B cell (primary cell): ENCODE measurements at regions of chr11 and their contacts with region 1.

Region 1: GRCh38 chr11:114262681-114263512 is 33.3 kb upstream of the NNMT start:
- DNase-seq: peak; percentile 64
- ATAC-seq: no peak
- H3K4me3 ChIP-seq: no peak overlapping the region
- H3K4me3 Mint-ChIP-seq: no peak overlapping the region
- H3K27ac ChIP-seq: no peak overlapping the region
- H3K27ac Mint-ChIP-seq: no peak overlapping the region
- H3K4me1 ChIP-seq: peaks cover 30 to 31% of the 10 kb centered on the region in 2 donors
- H3K4me1 Mint-ChIP-seq: peaks cover 29% of the 10 kb centered on the region
- H3K27me3 ChIP-seq: peaks cover 0 to 3% (median 1%) of the 10 kb centered on the region in 4 experiments
- H3K27me3 Mint-ChIP-seq: no peaks in the 10 kb centered on the region
- CTCF ChIP-seq: peak; percentile 76

Region 2: DNA sequence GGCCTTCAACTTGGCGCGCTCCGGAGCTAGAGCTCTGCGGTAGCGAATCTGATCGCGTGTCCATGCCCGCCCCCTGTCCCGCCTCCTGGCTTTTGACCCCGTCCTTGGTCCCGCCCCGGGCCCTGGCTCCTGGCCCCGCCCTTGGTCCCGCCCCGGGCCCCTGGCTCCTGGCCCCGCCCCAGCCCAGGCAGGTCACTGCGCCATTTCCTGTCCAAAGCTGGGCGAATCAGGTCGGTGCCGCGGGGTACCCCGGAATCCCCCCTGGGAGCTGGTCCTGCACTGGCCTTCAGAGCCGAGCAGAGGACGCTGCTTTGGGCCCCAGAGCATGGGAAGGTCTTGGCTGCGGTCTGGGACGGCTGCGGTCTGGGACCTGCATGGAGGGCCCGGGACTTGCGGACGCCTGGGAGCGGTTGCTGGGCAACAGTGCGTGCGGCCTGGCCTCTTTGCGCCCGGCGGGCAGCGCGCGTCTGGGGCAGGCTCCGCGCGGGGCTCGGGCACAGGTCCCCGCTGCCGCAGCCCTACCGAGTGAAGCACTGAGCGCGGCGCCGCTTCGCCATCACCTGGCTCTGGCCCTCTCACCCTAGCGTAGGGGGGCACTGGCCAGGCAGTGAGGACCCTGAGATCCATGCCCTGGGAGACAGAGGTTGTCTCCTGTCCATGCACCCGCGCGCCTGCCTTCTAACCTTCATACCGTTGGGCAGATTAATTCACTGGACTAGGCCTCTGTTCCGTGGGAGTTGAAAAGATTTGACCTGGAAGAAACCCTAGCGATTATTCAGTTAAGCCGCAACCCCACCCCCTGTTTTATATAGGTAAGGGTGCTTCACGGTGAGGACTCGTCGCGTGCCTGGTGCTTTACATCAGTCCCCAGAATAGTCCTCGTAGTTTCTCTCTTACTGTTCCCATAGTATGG is 948.3 kb before region 1 on chr11 and contains the start of gene TTC12:
- CTCF ChIA-PET with region 1: interaction called, 32 read pairs
- POLR2A ChIA-PET with region 1: no interaction called
- intact Hi-C with region 1: no loop called
- DNase-seq: peak; percentile 94
- ATAC-seq: peak; percentile 99
- H3K4me3 ChIP-seq: peak within 1 kb of the TSS; percentile 53 to 89 (median 67)
- H3K4me3 Mint-ChIP-seq: peak within 1 kb of the TSS; percentile 82
- H3K27ac ChIP-seq: peak within 1 kb of the TSS; percentile 80 to 94
- H3K27ac Mint-ChIP-seq: peak within 1 kb of the TSS; percentile 87
- H3K4me1 ChIP-seq: peaks cover 15 to 20% of the 10 kb centered on the region in 2 donors
- H3K4me1 Mint-ChIP-seq: peaks cover 24% of the 10 kb centered on the region
- H3K27me3 ChIP-seq: no peaks in the 10 kb centered on the region
- H3K27me3 Mint-ChIP-seq: no peaks in the 10 kb centered on the region
- CTCF ChIP-seq: no peak
- total RNA-seq, gene TTC12: 47.3 and 63.8 TPM in 2 replicates

Region 3: GRCh38 chr11:113896156-113896879 is 366.6 kb before region 1 on chr11:
- CTCF ChIA-PET with region 1: interaction called, 472 read pairs
- POLR2A ChIA-PET with region 1: interaction called, 10 read pairs
- intact Hi-C with region 1: loop called (anchors 1 kb)
- DNase-seq: peak; percentile 75
- ATAC-seq: peak; percentile 84
- H3K4me3 ChIP-seq: no peak overlapping the region
- H3K4me3 Mint-ChIP-seq: no peak overlapping the region
- H3K27ac ChIP-seq: no peak overlapping the region
- H3K27ac Mint-ChIP-seq: no peak overlapping the region
- H3K4me1 ChIP-seq: peaks cover 5 to 13% of the 10 kb centered on the region in 2 donors
- H3K4me1 Mint-ChIP-seq: peaks cover 16% of the 10 kb centered on the region
- H3K27me3 ChIP-seq: no peaks in the 10 kb centered on the region
- H3K27me3 Mint-ChIP-seq: no peaks in the 10 kb centered on the region
- CTCF ChIP-seq: peak; percentile 84

Region 4: DNA sequence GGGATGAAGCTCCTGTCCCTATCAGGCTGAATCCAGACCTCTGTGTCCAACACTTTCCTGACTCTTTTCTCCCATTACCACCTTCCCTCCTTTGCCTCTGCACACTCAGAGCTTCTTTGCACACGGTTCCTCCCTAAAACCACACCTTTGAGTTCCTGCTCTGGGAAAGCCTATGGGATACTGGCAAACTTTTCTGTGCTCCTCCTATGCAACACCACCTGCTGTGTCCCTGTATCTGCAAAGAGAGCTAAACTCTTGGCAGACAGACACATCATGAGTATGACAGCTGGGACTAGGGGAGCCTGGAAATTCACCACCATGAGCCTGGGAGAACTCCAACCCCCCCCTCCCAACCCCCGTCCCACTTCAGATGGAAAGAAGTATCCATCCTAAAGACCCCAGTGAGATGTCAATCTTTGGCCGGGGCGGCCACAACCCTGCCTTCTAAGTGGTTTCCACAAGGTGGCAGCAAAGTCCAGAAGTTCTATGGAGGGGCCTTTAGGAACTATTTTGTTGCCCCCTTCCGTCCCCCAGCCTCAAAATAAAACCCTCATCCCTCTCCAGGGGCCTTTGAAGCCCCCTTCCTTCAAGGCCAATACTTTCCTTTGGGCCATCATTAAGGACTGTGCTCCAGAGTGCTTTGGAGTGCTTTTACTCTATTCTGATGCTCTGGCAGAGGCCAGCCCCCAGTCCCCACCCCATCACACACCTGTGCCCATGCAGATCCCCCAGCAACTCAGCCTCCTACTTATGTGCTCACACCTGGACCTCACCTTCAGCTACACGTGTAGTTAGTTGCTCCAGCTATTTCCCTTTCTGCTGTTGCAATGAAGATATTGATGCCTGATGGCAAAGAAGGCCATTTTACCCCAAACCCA is 268.6 kb before region 1 on chr11:
- CTCF ChIA-PET with region 1: interaction called, 592 read pairs
- POLR2A ChIA-PET with region 1: interaction called, 17 read pairs
- intact Hi-C with region 1: loop called (anchors 1 kb)
- DNase-seq: peak; percentile 66
- ATAC-seq: peak; percentile 66
- H3K4me3 ChIP-seq: no peak overlapping the region
- H3K4me3 Mint-ChIP-seq: no peak overlapping the region
- H3K27ac ChIP-seq: no peak overlapping the region
- H3K27ac Mint-ChIP-seq: no peak overlapping the region
- H3K4me1 ChIP-seq: peaks cover 7 to 20% of the 10 kb centered on the region in 2 donors
- H3K4me1 Mint-ChIP-seq: peaks cover 9% of the 10 kb centered on the region
- H3K27me3 ChIP-seq: peaks cover 0 to 3% (median 0%) of the 10 kb centered on the region in 4 experiments
- H3K27me3 Mint-ChIP-seq: peaks cover 8% of the 10 kb centered on the region
- CTCF ChIP-seq: peak; percentile 79

Region 5: DNA sequence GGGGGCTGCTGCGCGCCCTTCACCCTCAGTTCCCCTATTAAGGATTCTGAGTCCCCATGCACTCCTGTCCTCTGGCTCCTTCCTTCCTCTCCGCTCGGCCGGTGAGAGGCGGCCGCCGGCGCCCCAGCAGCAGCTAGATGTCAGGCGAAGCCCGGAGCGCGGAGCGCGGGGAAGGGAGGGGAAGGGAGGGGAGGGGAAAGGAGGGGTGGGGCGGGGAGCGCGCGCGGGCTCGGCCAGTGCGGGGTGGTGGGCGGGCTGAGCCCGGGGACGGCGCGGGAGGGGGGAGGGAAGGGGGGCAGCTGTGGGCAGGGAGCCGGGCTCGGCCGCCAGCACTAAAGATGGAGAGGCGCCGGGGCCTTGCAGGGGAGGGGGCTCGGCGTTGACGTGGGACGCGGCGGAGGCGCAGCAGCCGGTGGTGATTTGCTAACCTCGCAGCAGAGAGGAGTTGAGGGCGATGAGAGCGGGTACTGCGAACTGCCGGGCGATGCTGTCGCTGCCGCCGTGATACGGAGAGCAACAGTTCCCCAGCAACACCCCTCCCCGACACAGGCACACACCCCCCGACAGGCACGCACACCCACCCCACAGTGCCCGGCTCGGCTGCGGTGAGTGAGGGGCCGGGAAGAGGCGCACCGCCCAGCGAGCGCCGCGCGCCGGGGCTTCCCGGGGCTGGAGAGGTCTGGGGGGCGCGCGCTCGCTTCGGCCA is 203.5 kb before region 1 on chr11 and contains the start of gene ZBTB16:
- CTCF ChIA-PET with region 1: interaction called, 49 read pairs
- POLR2A ChIA-PET with region 1: interaction called, 3 read pairs
- intact Hi-C with region 1: loop called (anchors 2 kb)
- DNase-seq: peak; percentile 72
- ATAC-seq: peak; percentile 59
- H3K4me3 ChIP-seq: peak within 1 kb of the TSS; percentile 54 to 84 (median 67)
- H3K4me3 Mint-ChIP-seq: peak within 1 kb of the TSS; percentile 90
- H3K27ac ChIP-seq: no peak within 1 kb of the TSS
- H3K27ac Mint-ChIP-seq: peak within 1 kb of the TSS; percentile 62
- H3K4me1 ChIP-seq: peaks cover 9 to 20% of the 10 kb centered on the region in 2 donors
- H3K4me1 Mint-ChIP-seq: peaks cover 18% of the 10 kb centered on the region
- H3K27me3 ChIP-seq: peaks cover 0 to 40% (median 18%) of the 10 kb centered on the region in 4 experiments
- H3K27me3 Mint-ChIP-seq: peaks cover 53% of the 10 kb centered on the region
- CTCF ChIP-seq: no peak
- total RNA-seq, gene ZBTB16: 17.8 and 20.6 TPM in 2 replicates

Region 6: DNA sequence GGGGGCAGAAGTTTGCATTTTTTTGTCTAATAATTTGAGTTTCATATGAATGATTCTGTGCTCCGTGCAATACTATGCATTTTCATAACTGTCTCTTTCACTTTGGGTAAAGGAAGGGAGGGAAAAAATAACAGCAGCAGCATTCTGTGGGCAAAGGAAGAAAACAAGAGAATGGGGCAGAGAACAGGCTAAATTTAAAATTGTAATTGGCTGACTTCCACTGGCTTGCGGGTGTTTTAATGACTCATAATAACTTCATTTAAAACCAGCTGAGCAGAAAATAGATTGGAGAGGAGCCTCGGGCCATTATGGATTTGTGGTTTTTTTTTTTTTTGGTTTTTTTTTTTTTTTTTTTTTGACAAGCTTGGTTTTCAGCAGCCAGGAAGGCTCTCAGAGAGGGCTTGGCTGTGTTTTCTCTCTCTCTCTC is 96.0 kb before region 1 on chr11:
- CTCF ChIA-PET with region 1: interaction called, 100 read pairs
- POLR2A ChIA-PET with region 1: no interaction called
- intact Hi-C with region 1: no loop called
- DNase-seq: no peak
- ATAC-seq: peak; percentile 22
- H3K4me3 ChIP-seq: peak overlapping the region in 1 of 5 experiments; percentile 40
- H3K4me3 Mint-ChIP-seq: peak overlapping the region; percentile 64
- H3K27ac ChIP-seq: no peak overlapping the region
- H3K27ac Mint-ChIP-seq: peak overlapping the region; percentile 32
- H3K4me1 ChIP-seq: peaks cover 76 to 81% of the 10 kb centered on the region in 2 donors
- H3K4me1 Mint-ChIP-seq: peaks cover 83% of the 10 kb centered on the region
- H3K27me3 ChIP-seq: no peaks in the 10 kb centered on the region
- H3K27me3 Mint-ChIP-seq: peaks cover 7% of the 10 kb centered on the region
- CTCF ChIP-seq: no peak

Region 7: GRCh38 chr11:114250993-114251814 is 11.7 kb before region 1 on chr11:
- CTCF ChIA-PET with region 1: interaction called, 52 read pairs
- POLR2A ChIA-PET with region 1: no interaction called
- intact Hi-C with region 1: no loop called
- DNase-seq: no peak
- ATAC-seq: no peak
- H3K4me3 ChIP-seq: no peak overlapping the region
- H3K4me3 Mint-ChIP-seq: no peak overlapping the region
- H3K27ac ChIP-seq: no peak overlapping the region
- H3K27ac Mint-ChIP-seq: no peak overlapping the region
- H3K4me1 ChIP-seq: peaks cover 4 to 8% of the 10 kb centered on the region in 2 donors
- H3K4me1 Mint-ChIP-seq: peaks cover 9% of the 10 kb centered on the region
- H3K27me3 ChIP-seq: no peaks in the 10 kb centered on the region
- H3K27me3 Mint-ChIP-seq: peaks cover 5% of the 10 kb centered on the region
- CTCF ChIP-seq: no peak

Region 8: DNA sequence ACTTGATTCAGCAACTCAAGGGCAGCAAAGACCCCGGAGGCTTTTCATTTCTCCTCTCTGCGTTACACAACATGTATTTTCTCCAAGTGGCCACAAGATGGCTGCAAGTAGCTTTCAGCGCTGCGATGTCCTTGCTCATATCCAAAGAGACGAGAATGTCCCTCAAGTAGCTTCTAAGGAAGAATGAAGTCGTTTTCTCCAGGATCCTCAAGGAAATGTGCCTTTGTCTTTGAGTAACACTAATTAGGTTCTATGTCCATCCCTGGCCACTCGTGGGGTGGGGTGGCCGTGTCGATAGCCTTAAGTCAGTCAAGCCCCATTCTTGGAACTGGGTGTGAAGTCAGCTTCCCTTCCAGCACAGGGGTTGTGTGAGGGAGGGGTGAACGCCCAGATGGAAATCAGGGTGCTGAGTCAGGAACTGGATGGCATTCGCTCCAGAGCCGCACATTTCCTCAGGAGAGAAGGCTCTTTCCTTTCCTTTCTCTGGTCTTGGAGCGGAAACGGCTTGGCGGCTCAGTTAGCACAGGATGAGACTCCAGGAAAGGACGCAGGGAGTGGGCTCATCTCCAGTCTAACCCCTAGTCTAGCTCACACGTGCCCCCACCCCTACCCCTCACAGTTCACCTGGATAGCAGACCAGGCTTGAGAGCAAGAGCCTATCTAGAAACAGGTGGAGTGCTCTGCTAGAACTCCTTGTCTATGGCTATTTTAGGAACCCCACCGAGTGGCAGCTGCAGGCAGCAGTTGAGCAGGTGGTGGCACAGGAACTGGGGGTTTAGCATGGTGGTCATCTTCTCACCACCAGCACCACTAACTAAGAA is 77.6 kb after region 1 on chr11:
- CTCF ChIA-PET with region 1: no interaction called
- POLR2A ChIA-PET with region 1: no interaction called
- intact Hi-C with region 1: no loop called
- DNase-seq: peak; percentile 62
- ATAC-seq: peak; percentile 60
- H3K4me3 ChIP-seq: peak overlapping the region in 4 of 5 experiments; percentile 1 to 41 (median 9)
- H3K4me3 Mint-ChIP-seq: peak overlapping the region; percentile 27
- H3K27ac ChIP-seq: no peak overlapping the region
- H3K27ac Mint-ChIP-seq: no peak overlapping the region
- H3K4me1 ChIP-seq: peaks cover 6 to 8% of the 10 kb centered on the region in 2 donors
- H3K4me1 Mint-ChIP-seq: peaks cover 8% of the 10 kb centered on the region
- H3K27me3 ChIP-seq: peaks cover 0 to 8% (median 4%) of the 10 kb centered on the region in 4 experiments
- H3K27me3 Mint-ChIP-seq: peaks cover 13% of the 10 kb centered on the region
- CTCF ChIP-seq: peak; percentile 83